Mammary epithelial cell (primary cell): ENCODE measurements at regions of chr22 and their contacts with region 1.

Region 1: DNA sequence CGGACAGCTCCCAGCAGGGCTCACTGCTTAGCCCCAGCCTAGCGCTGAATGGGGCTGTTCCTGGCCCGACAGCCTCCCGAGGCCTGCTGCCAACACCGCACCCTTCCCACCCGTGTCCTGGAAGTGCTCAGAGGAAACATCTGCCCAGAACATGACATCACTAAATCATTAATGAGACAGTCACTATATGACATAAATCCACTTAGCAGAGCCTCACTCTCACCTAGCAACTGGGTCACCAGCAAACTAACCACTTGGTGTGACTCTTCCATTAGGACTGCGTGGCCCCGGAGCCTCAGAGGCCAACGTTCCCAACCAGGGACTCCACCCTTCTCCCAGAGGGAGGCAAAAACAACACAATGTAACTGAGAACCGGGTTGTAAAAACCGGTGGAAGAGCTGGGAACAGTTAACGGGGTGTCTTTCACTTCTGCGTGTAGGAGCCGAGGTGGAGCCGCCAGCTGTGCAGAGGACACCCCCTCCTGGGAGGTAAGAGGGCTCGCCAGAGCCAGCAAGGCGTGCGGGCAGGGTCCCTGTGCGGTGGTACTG is 21.4 kb upstream of the PACSIN2 start:
- DNase-seq: no peak
- H3K4me3 ChIP-seq: no peak overlapping the region
- H3K27ac ChIP-seq: no peak overlapping the region
- H3K4me1 ChIP-seq: no peaks in the 10 kb centered on the region
- H3K27me3 ChIP-seq: no peaks in the 10 kb centered on the region
- CTCF ChIP-seq: no peak

Region 2: GRCh38 chr22:42868751-42869251 is 167.6 kb before region 1 on chr22:
- CTCF ChIA-PET with region 1: no interaction called
- dilution Hi-C with region 1: no loop called
- in situ Hi-C with region 1: no loop called
- intact Hi-C with region 1: loop called (anchors 5 kb)
- DNase-seq: no peak
- H3K4me3 ChIP-seq: no peak overlapping the region
- H3K27ac ChIP-seq: no peak overlapping the region
- H3K4me1 ChIP-seq: peaks cover 4% of the 10 kb centered on the region
- H3K27me3 ChIP-seq: no peaks in the 10 kb centered on the region
- CTCF ChIP-seq: no peak

Region 3: DNA sequence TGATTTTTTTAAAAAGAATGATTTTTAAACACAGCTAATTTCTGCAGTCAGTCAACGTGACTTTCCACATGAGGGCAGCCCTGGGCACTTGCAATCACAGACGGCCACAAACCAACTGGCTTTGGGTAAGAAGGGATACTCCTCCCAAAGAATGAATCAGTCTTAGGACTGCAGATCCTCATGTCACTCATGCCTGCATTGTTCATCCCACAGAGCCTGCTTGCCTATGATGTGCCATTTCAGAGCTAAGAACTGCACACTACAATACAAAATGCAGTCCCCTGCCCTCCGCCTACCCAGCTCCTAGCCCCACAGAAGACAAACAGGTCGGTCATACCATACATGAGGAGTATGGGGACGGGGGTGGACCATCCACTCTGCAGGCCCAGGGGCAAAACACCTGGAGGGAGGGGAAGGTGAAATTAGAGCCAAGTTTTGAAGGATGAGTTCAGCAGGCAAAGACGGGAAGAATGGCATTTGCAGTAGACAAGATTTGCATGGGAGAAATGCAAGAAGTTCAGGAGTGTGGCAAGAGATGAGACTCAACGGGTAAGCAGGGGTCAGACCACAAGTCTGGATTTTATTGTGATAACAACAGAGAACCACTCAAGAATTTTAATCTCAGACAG is 46.1 kb before region 1 on chr22:
- CTCF ChIA-PET with region 1: interaction called, 5 read pairs
- dilution Hi-C with region 1: no loop called
- in situ Hi-C with region 1: no loop called
- intact Hi-C with region 1: loop called (anchors 1 kb)
- DNase-seq: peak; percentile 88
- H3K4me3 ChIP-seq: no peak overlapping the region
- H3K27ac ChIP-seq: no peak overlapping the region
- H3K4me1 ChIP-seq: peaks cover 46% of the 10 kb centered on the region
- H3K27me3 ChIP-seq: no peaks in the 10 kb centered on the region
- CTCF ChIP-seq: peak; percentile 41 to 69

Region 4: DNA sequence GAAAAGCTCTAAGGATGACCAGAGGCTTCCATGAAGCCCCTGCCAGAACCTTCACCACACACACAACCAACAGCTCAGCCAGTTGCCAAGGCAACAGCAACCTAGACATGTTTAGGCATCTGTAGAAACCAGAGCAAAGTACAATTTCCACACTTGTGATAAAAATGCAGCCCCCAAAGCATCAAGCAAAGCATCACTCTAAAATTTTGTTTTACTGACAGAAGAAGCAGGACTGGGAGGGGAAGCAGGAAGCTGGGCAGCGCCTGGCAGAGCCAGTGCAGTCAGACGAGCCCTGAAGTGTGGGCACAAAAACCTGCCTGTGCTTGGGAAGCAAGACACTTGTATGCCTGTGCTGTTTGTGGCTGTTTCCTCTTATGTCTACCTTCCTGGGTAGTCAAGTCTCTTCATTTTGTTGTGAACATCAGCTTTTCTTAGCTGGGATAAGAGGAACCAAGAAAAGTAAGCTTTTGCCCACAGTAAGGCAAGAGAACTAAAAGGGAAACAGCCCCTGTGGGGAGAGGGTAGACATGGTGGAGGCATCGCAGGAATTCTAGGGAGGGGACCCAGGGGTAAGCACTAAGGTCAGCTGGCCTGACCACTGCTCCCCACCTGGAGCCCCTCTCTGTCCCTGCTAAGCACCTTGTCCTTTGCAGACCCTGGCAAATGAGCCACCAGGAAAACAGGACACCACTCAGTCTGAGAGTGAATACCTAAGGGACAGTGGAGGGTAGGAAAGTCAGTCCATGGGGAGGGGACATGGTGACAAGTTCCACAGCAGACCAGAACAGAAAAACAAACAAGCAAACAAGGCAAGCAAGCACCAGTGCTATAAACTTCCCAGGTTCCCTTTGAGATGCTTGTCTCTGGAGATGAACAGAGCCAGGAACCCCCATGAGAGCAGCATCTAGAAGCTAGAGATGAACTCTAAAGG is 34.8 kb before region 1 on chr22:
- CTCF ChIA-PET with region 1: interaction called, 3 read pairs
- dilution Hi-C with region 1: loop called (anchors 5 kb)
- in situ Hi-C with region 1: no loop called
- intact Hi-C with region 1: no loop called
- DNase-seq: no peak
- H3K4me3 ChIP-seq: no peak overlapping the region
- H3K27ac ChIP-seq: peak overlapping the region; percentile 81
- H3K4me1 ChIP-seq: peaks cover 67% of the 10 kb centered on the region
- H3K27me3 ChIP-seq: no peaks in the 10 kb centered on the region
- CTCF ChIP-seq: no peak

Region 5: DNA sequence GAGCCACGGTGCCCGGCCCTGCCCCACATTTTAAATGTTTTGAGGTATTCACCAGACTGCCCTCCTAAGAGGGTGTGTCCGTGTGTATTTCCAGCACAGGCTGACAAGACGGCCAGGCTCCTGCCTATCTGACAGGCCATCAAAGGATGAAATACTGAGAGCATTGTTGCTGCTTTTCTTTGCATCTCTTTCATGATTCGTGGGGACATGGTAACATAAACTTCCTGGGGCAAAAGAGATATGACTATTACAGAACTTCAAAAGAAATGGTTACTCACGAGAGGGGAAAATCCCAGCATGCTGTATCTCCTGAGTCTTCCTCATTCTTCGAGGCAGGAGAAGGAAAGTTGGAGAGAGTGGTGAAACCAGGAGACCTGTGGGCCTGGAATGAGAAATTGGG is 63.9 kb after region 1 on chr22:
- CTCF ChIA-PET with region 1: no interaction called
- dilution Hi-C with region 1: no loop called
- in situ Hi-C with region 1: no loop called
- intact Hi-C with region 1: no loop called
- DNase-seq: peak; percentile 53
- H3K4me3 ChIP-seq: no peak overlapping the region
- H3K27ac ChIP-seq: no peak overlapping the region
- H3K4me1 ChIP-seq: peaks cover 4% of the 10 kb centered on the region
- H3K27me3 ChIP-seq: no peaks in the 10 kb centered on the region
- CTCF ChIP-seq: no peak